Uterus (tissue), 4 donors: ENCODE measurements at regions of chr19 and their contacts with region 1.

Region 1: GRCh38 chr19:48108997-48109782 is 1.4 kb downstream of the PLA2G4C start:
- DNase-seq: no peak
- H3K4me3 ChIP-seq: no peak overlapping the region
- H3K27ac ChIP-seq: peak overlapping the region in 1 of 2 donors; percentile 93
- H3K4me1 ChIP-seq: no peaks in the 10 kb centered on the region
- H3K27me3 ChIP-seq: no peaks in the 10 kb centered on the region
- CTCF ChIP-seq: no peak
- POLR2A ChIP-seq: no peak

Region 2: GRCh38 chr19:48152551-48152950 is 43.4 kb after region 1 on chr19:
- intact Hi-C with region 1: loop called (anchors 5 kb)
- DNase-seq: peak; percentile 68 to 72
- H3K4me3 ChIP-seq: no peak overlapping the region
- H3K27ac ChIP-seq: no peak overlapping the region
- H3K4me1 ChIP-seq: no peaks in the 10 kb centered on the region
- H3K27me3 ChIP-seq: no peaks in the 10 kb centered on the region
- CTCF ChIP-seq: peak; percentile 80 to 88 (median 82)
- POLR2A ChIP-seq: no peak